A549 (cell line): ENCODE measurements at regions of chr14 and their contacts with region 1.

Region 1: GRCh38 chr14:24710403-24711112 is 76.6 kb upstream of the GZMB start:
- DNase-seq: peak; percentile 26 to 58
- ATAC-seq: peak; percentile 72 to 89; a peak in 4 of 6 replicates
- H3K4me3 ChIP-seq: no peak overlapping the region
- H3K27ac ChIP-seq: no peak overlapping the region
- H3K4me1 ChIP-seq: no peaks in the 10 kb centered on the region
- CTCF ChIP-seq: peak; percentile 72
- EP300 ChIP-seq: no peak
- POLR2A ChIP-seq: no peak
- RAD21 ChIP-seq: peak; percentile 61 to 68; a peak in 4 of 5 replicates

Region 2: DNA sequence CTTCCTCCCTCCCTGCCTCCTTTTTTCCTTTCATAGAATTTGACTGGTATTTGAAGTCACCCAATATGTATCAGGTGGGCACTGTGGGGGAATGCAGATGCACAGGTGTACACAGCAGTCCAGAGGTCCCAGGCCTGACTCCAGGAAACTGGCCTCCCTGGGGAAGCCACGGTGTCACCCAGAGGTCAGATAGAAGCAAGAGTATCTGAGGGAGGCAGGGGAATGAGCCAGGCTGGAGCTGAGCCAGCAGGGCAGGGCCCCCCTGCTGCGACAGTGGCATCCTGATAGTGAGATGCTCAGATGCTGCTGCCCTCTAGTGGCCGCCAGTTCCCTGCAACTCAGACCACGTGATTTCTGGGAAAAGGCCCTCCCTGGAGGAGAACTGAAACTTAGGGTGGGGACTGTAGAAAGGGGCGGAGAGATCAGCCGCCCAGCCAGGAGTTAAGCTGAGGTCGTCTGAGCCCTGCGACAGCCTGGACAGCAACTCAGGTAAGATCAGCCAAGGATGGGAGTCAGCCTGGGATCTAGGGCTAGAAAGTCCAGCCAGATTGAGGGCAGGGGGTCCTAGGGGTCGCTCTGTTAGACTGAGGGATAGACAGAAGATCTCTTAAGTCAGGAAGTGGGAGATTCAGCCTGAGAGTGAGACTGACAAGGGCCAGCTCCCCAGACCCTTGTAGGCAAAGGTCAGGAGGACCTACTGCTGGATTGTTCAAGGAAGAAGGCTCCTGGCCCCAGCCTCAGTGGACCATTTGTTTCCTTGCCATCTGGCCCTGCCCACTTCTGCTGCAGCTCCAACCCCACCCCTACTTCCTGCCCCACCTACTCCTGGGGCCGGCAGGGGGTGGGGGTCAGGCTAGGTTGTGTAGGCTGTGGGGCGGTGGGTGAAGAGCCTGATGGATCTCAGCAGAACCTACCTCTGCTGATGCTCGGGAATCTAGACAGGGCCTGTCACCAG is 549.4 kb before region 1 on chr14 and contains the start of gene IRF9:
- CTCF ChIA-PET with region 1: no interaction called
- POLR2A ChIA-PET with region 1: no interaction called
- DNase-seq: peak; percentile 95 to 96
- ATAC-seq: peak; percentile 79 to 94
- H3K4me3 ChIP-seq: peak within 1 kb of the TSS; percentile 47
- H3K27ac ChIP-seq: peak within 1 kb of the TSS; percentile 86 to 91
- H3K4me1 ChIP-seq: peaks cover 25% of the 10 kb centered on the region
- CTCF ChIP-seq: peak; percentile 92
- EP300 ChIP-seq: no peak
- POLR2A ChIP-seq: no peak
- RAD21 ChIP-seq: peak; percentile 72 to 78
- polyA plus RNA-seq, gene IRF9: 23.1 and 30.2 TPM in 2 replicates

Region 3: GRCh38 chr14:24699052-24699451 is 11.5 kb before region 1 on chr14:
- CTCF ChIA-PET with region 1: interaction called, 20 read pairs
- POLR2A ChIA-PET with region 1: no interaction called
- DNase-seq: no peak
- ATAC-seq: no peak
- H3K4me3 ChIP-seq: no peak overlapping the region
- H3K27ac ChIP-seq: no peak overlapping the region
- H3K4me1 ChIP-seq: no peaks in the 10 kb centered on the region
- CTCF ChIP-seq: no peak
- EP300 ChIP-seq: no peak
- POLR2A ChIP-seq: no peak
- RAD21 ChIP-seq: no peak

Region 4: GRCh38 chr14:24725311-24725710 is 14.8 kb after region 1 on chr14:
- CTCF ChIA-PET with region 1: interaction called, 23 read pairs
- POLR2A ChIA-PET with region 1: no interaction called
- DNase-seq: no peak
- ATAC-seq: no peak
- H3K4me3 ChIP-seq: no peak overlapping the region
- H3K27ac ChIP-seq: no peak overlapping the region
- H3K4me1 ChIP-seq: no peaks in the 10 kb centered on the region
- CTCF ChIP-seq: no peak
- EP300 ChIP-seq: no peak
- POLR2A ChIP-seq: no peak
- RAD21 ChIP-seq: no peak

Region 5: DNA sequence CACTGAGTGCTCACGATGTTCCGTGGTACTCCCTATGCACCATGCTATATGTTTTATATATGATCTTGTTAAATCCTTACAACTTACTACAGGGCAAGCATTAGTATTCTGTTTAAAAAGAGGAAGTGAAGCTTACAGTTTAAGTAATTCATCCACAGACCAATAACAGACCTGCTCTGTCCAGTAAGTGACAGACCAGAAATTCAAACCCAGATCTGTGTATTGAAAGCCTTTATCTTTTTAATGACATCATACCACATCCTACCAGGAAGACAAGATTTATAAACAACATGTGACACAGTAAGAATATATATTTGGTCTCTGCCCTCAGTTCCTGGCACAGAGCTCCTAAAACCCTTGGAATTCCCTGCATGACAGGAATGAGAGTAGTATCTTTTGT is 132.9 kb after region 1 on chr14:
- CTCF ChIA-PET with region 1: no interaction called
- POLR2A ChIA-PET with region 1: no interaction called
- DNase-seq: no peak
- ATAC-seq: no peak
- H3K4me3 ChIP-seq: no peak overlapping the region
- H3K27ac ChIP-seq: no peak overlapping the region
- H3K4me1 ChIP-seq: peaks cover 7% of the 10 kb centered on the region; the same call in 1 of the 3 replicates
- CTCF ChIP-seq: no peak
- EP300 ChIP-seq: no peak
- POLR2A ChIP-seq: no peak
- RAD21 ChIP-seq: no peak